CD14-positive monocyte (primary cell): ENCODE measurements at regions of chr12 and their contacts with region 1.

Region 1: DNA sequence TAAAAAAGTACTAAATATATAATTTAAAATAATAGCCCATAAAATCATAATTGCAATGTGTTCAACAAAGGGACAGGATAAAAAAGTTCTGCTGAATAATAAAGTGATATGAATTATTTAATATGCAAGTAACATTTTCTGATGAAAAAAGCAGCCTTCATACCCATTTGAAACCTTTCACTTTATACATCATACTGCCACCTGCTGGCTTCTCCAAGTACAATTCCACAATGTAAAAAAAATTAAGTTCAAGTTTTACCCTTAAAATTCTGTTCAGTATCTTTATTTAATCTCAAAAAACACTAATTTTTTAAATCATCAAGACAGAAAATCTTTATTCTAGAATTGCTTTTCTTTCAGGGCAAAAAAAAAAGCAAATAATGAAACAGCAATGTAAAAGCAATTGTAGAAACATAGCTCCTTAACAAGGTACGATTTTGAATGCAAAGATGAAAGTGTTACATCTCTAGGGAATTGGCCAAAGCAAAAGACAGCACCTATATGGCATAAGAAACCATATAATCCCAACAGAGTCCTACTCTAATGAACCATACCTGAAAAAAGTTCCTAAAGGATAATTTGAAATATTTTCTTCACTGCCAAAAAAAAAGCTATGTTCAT is 15.0 kb downstream of the MDM1 start:
- DNase-seq: peak; percentile 18 to 53 (median 40)
- H3K4me3 ChIP-seq: no peak overlapping the region
- H3K4me3 Mint-ChIP-seq: no peak overlapping the region
- H3K27ac ChIP-seq: no peak overlapping the region
- H3K27ac Mint-ChIP-seq: no peak overlapping the region
- H3K4me1 ChIP-seq: no peaks in the 10 kb centered on the region
- H3K4me1 Mint-ChIP-seq: no peaks in the 10 kb centered on the region
- H3K27me3 ChIP-seq: no peaks in the 10 kb centered on the region
- H3K27me3 Mint-ChIP-seq: no peaks in the 10 kb centered on the region
- CTCF ChIP-seq: peak; percentile 80

Region 2: DNA sequence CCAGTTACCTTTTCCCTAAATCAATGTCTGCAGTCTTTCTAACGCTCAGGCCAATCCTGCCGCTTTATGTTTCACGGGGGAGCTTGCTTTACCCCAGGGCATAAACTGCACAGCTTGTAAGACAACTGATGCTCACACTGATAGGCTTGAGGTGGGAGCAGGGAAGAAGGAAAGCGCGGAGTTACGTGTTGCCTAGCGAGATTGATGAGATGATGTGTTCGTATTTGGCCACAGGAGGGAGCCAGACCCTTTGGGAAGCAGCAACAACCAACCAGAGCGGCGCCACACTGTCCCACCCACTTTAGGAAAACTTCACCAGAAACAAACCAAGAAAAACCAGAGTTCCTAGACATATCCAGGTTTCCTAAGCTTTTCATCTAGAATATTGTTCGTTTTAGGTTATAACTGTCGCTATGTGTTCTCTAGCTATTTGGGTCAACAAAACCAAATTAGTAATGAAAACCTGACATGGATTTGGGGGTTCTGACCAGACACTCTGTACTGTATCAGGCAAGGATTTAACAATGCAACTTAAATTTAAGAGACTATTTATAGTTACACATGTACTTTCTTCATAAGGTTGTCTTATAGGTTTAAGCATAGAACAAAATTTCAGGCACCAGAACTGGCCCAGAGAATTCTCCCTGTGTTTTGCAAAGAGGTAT is 93.9 kb before region 1 on chr12:
- intact Hi-C with region 1: loop called (anchors 5 kb)
- DNase-seq: peak; percentile 48 to 66 (median 54)
- H3K4me3 ChIP-seq: no peak overlapping the region
- H3K4me3 Mint-ChIP-seq: peak overlapping the region; percentile 50 to 78
- H3K27ac ChIP-seq: no peak overlapping the region
- H3K27ac Mint-ChIP-seq: no peak overlapping the region
- H3K4me1 ChIP-seq: peaks cover 0 to 5% of the 10 kb centered on the region in 2 donors
- H3K4me1 Mint-ChIP-seq: peaks cover 6% of the 10 kb centered on the region
- H3K27me3 ChIP-seq: peaks cover 2% of the 10 kb centered on the region in 2 donors
- H3K27me3 Mint-ChIP-seq: peaks cover 2 to 22% (median 3%) of the 10 kb centered on the region in 3 donors
- CTCF ChIP-seq: peak; percentile 93

Region 3: GRCh38 chr12:68267892-68268396 is 49.2 kb before region 1 on chr12:
- intact Hi-C with region 1: no loop called
- DNase-seq: no peak
- H3K4me3 ChIP-seq: no peak overlapping the region
- H3K4me3 Mint-ChIP-seq: peak overlapping the region in 1 of 2 donors; percentile 28
- H3K27ac ChIP-seq: no peak overlapping the region
- H3K27ac Mint-ChIP-seq: peak overlapping the region in 2 of 7 donors; percentile 14 to 66
- H3K4me1 ChIP-seq: peaks cover 23 to 26% of the 10 kb centered on the region in 2 donors
- H3K4me1 Mint-ChIP-seq: peaks cover 40% of the 10 kb centered on the region
- H3K27me3 ChIP-seq: no peaks in the 10 kb centered on the region
- H3K27me3 Mint-ChIP-seq: peaks cover 0 to 2% (median 0%) of the 10 kb centered on the region in 3 donors
- CTCF ChIP-seq: no peak

Region 4: DNA sequence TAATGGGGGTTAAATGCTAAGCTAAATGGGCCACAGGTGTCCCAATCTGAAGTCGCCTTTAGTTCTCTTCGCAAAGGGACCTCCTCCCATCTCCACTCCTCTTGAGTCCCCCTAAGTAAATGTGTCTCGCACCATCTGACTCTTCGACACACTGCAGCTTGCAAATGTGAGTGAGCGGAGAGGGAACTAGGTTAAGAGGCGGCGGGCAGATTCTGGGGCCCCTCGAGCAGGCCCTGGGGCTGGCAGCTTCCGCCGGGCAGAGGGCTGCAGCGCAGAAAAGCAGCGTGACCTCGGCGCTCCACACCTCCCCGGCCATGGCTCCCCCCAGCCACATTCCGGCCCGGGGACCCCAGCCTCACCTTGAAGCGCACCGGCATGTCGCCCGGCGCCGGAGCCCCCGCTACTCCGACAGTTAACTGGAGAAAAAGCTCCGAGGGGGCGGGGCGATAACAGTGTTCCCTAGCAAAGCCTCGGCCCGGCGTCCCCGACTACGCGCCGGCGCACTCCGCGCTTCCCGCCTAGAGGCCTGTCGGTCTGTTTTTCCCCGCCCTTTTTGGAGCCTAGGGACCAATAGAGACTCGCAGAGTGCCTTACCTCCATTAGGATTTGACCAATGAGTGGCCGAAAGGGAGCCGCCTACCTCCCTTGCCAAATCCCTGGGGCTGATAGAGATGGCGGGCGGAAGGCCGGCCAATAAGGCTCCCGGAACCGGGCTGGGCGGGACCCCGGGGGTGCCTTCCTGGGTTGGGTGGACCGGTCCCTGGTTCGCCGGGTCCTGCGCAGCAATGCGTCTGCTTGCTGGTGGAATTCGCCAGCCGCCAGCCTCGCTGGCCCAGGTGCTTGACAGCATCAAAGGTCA is 14.9 kb after region 1 on chr12 and contains the start of gene MDM1:
- intact Hi-C with region 1: no loop called
- DNase-seq: peak; percentile 96 to 99 (median 96)
- H3K4me3 ChIP-seq: peak within 1 kb of the TSS; percentile 62 to 82 (median 78)
- H3K4me3 Mint-ChIP-seq: peak within 1 kb of the TSS; percentile 82 to 93
- H3K27ac ChIP-seq: peak within 1 kb of the TSS; percentile 58 to 75
- H3K27ac Mint-ChIP-seq: peak within 1 kb of the TSS; percentile 84 to 93 (median 88)
- H3K4me1 ChIP-seq: peaks cover 23 to 26% of the 10 kb centered on the region in 2 donors
- H3K4me1 Mint-ChIP-seq: peaks cover 42% of the 10 kb centered on the region
- H3K27me3 ChIP-seq: no peaks in the 10 kb centered on the region
- H3K27me3 Mint-ChIP-seq: no peaks in the 10 kb centered on the region
- CTCF ChIP-seq: no peak
- polyA plus RNA-seq, gene MDM1: 6.7 to 10.9 (median 10.3) TPM